PC-3 (cell line): ENCODE measurements at regions of chr7 and their contacts with region 1.

Region 1: GRCh38 chr7:1412322-1413261 is 46.7 kb downstream of the MICALL2 start:
- DNase-seq: peak; percentile 93
- ATAC-seq: peak; percentile 96
- H3K4me3 ChIP-seq: peak overlapping the region; percentile 21; the same call in 1 of the 2 replicates
- H3K27ac ChIP-seq: no peak overlapping the region
- H3K4me1 ChIP-seq: peaks cover 3% of the 10 kb centered on the region; the same call in 1 of the 2 replicates
- H3K27me3 ChIP-seq: no peaks in the 10 kb centered on the region
- CTCF ChIP-seq: peak; percentile 87

Region 2: GRCh38 chr7:1225441-1226185 is 187.0 kb before region 1 on chr7:
- CTCF ChIA-PET with region 1: no interaction called
- POLR2A ChIA-PET with region 1: no interaction called
- intact Hi-C with region 1: loop called (anchors 5 kb)
- DNase-seq: peak; percentile 19
- ATAC-seq: peak; percentile 56
- H3K4me3 ChIP-seq: no peak overlapping the region
- H3K27ac ChIP-seq: no peak overlapping the region
- H3K4me1 ChIP-seq: no peaks in the 10 kb centered on the region
- H3K27me3 ChIP-seq: peaks cover 66% of the 10 kb centered on the region
- CTCF ChIP-seq: peak; percentile 82